Naive thymus-derived CD4-positive, alpha-beta T cell (primary cell): ENCODE measurements at regions of chrX and their contacts with region 1.

Region 1: GRCh38 chrX:9464435-9465371 is at the start of gene TBL1X:
- DNase-seq: peak; percentile 35 to 71 (median 43)
- ATAC-seq: peak; percentile 59
- H3K4me3 ChIP-seq: peak within 1 kb of the TSS; percentile 47
- H3K4me3 Mint-ChIP-seq: peak within 1 kb of the TSS; percentile 78 to 89 (median 86)
- H3K27ac ChIP-seq: peak within 1 kb of the TSS; percentile 86
- H3K27ac Mint-ChIP-seq: peak within 1 kb of the TSS; percentile 80 to 96 (median 89)
- H3K4me1 ChIP-seq: peaks cover 8 to 22% of the 10 kb centered on the region in 2 donors
- H3K4me1 Mint-ChIP-seq: peaks cover 24 to 66% (median 46%) of the 10 kb centered on the region in 7 donors
- H3K27me3 ChIP-seq: no peaks in the 10 kb centered on the region
- H3K27me3 Mint-ChIP-seq: peaks cover 0 to 3% (median 0%) of the 10 kb centered on the region in 5 donors
- total RNA-seq, gene TBL1X: 27.2 to 58.8 (median 29.4) TPM

Region 2: GRCh38 chrX:8755116-8755515 is 709.6 kb before region 1 on chrX:
- CTCF ChIA-PET with region 1: no interaction called
- POLR2A ChIA-PET with region 1: no interaction called
- intact Hi-C with region 1: no loop called
- DNase-seq: no peak
- ATAC-seq: no peak
- H3K4me3 ChIP-seq: no peak overlapping the region
- H3K4me3 Mint-ChIP-seq: no peak overlapping the region
- H3K27ac ChIP-seq: no peak overlapping the region
- H3K27ac Mint-ChIP-seq: no peak overlapping the region
- H3K4me1 ChIP-seq: no peaks in the 10 kb centered on the region
- H3K4me1 Mint-ChIP-seq: peaks cover 0 to 4% (median 0%) of the 10 kb centered on the region in 7 donors
- H3K27me3 ChIP-seq: no peaks in the 10 kb centered on the region
- H3K27me3 Mint-ChIP-seq: peaks cover 0 to 5% (median 0%) of the 10 kb centered on the region in 5 donors

Region 3: GRCh38 chrX:8820910-8821527 is 643.7 kb before region 1 on chrX:
- CTCF ChIA-PET with region 1: no interaction called
- POLR2A ChIA-PET with region 1: no interaction called
- intact Hi-C with region 1: loop called in 1 of 2 experiments (anchors 5 kb)
- DNase-seq: no peak
- ATAC-seq: no peak
- H3K4me3 ChIP-seq: no peak overlapping the region
- H3K4me3 Mint-ChIP-seq: no peak overlapping the region
- H3K27ac ChIP-seq: no peak overlapping the region
- H3K27ac Mint-ChIP-seq: peak overlapping the region in 1 of 9 donors; percentile 12
- H3K4me1 ChIP-seq: no peaks in the 10 kb centered on the region
- H3K4me1 Mint-ChIP-seq: no peaks in the 10 kb centered on the region
- H3K27me3 ChIP-seq: no peaks in the 10 kb centered on the region
- H3K27me3 Mint-ChIP-seq: peaks cover 0 to 13% (median 8%) of the 10 kb centered on the region in 5 donors

Region 4: GRCh38 chrX:9163214-9163681 is 301.5 kb before region 1 on chrX:
- CTCF ChIA-PET with region 1: no interaction called
- POLR2A ChIA-PET with region 1: no interaction called
- intact Hi-C with region 1: loop called (anchors 2 to 10 kb)
- DNase-seq: no peak
- ATAC-seq: no peak
- H3K4me3 ChIP-seq: no peak overlapping the region
- H3K4me3 Mint-ChIP-seq: no peak overlapping the region
- H3K27ac ChIP-seq: no peak overlapping the region
- H3K27ac Mint-ChIP-seq: peak overlapping the region in 1 of 9 donors; percentile 9
- H3K4me1 ChIP-seq: peaks cover 0 to 3% of the 10 kb centered on the region in 2 donors
- H3K4me1 Mint-ChIP-seq: peaks cover 0 to 39% (median 16%) of the 10 kb centered on the region in 7 donors
- H3K27me3 ChIP-seq: no peaks in the 10 kb centered on the region
- H3K27me3 Mint-ChIP-seq: peaks cover 0 to 5% (median 0%) of the 10 kb centered on the region in 5 donors

Region 5: GRCh38 chrX:9486764-9487387 is 22.2 kb after region 1 on chrX:
- CTCF ChIA-PET with region 1: no interaction called
- POLR2A ChIA-PET with region 1: no interaction called
- intact Hi-C with region 1: no loop called
- DNase-seq: no peak
- ATAC-seq: no peak
- H3K4me3 ChIP-seq: no peak overlapping the region
- H3K4me3 Mint-ChIP-seq: no peak overlapping the region
- H3K27ac ChIP-seq: no peak overlapping the region
- H3K27ac Mint-ChIP-seq: peak overlapping the region in 1 of 9 donors; percentile 1
- H3K4me1 ChIP-seq: no peaks in the 10 kb centered on the region
- H3K4me1 Mint-ChIP-seq: peaks cover 3 to 72% (median 53%) of the 10 kb centered on the region in 7 donors
- H3K27me3 ChIP-seq: no peaks in the 10 kb centered on the region
- H3K27me3 Mint-ChIP-seq: no peaks in the 10 kb centered on the region

Region 6: GRCh38 chrX:9515973-9516538 is 51.4 kb after region 1 on chrX:
- CTCF ChIA-PET with region 1: no interaction called
- POLR2A ChIA-PET with region 1: no interaction called
- intact Hi-C with region 1: loop called in 1 of 2 experiments (anchors 5 kb)
- DNase-seq: no peak
- ATAC-seq: peak; percentile 54
- H3K4me3 ChIP-seq: no peak overlapping the region
- H3K4me3 Mint-ChIP-seq: peak overlapping the region in 8 of 10 donors; percentile 41 to 73 (median 46)
- H3K27ac ChIP-seq: no peak overlapping the region
- H3K27ac Mint-ChIP-seq: peak overlapping the region in 6 of 9 donors; percentile 28 to 70 (median 51)
- H3K4me1 ChIP-seq: peaks cover 0 to 14% of the 10 kb centered on the region in 2 donors
- H3K4me1 Mint-ChIP-seq: peaks cover 18 to 60% (median 57%) of the 10 kb centered on the region in 7 donors
- H3K27me3 ChIP-seq: no peaks in the 10 kb centered on the region
- H3K27me3 Mint-ChIP-seq: no peaks in the 10 kb centered on the region

Region 7: DNA sequence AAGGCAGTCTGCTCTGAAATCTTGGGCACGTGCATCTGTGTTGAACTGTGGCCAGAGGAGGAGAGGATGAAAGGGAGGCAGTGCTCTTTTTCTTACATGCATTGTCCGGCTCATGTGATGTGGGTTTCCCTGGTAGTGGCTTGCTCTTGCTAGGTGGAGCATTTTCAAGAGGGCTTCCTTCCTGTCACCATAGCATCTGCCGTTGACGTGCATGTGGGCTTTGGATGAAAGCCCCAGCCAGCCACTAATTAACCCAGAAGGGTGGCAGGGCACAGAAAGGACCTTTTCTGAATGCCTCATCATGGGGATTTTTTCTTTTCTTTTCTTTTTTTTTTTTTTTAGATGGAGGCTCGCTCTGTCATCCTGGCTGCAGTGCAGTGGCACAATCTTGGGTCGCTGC is 179.6 kb after region 1 on chrX:
- CTCF ChIA-PET with region 1: interaction called, 3 read pairs
- POLR2A ChIA-PET with region 1: no interaction called
- intact Hi-C with region 1: loop called in 1 of 2 experiments (anchors 10 kb)
- DNase-seq: peak in 8 of 9 donors; percentile 22 to 58 (median 36)
- ATAC-seq: peak; percentile 92
- H3K4me3 ChIP-seq: no peak overlapping the region
- H3K4me3 Mint-ChIP-seq: peak overlapping the region in 8 of 10 donors; percentile 28 to 60 (median 49)
- H3K27ac ChIP-seq: no peak overlapping the region
- H3K27ac Mint-ChIP-seq: peak overlapping the region in 7 of 9 donors; percentile 9 to 78 (median 52)
- H3K4me1 ChIP-seq: peaks cover 3 to 4% of the 10 kb centered on the region in 2 donors
- H3K4me1 Mint-ChIP-seq: peaks cover 14 to 41% (median 36%) of the 10 kb centered on the region in 7 donors
- H3K27me3 ChIP-seq: no peaks in the 10 kb centered on the region
- H3K27me3 Mint-ChIP-seq: no peaks in the 10 kb centered on the region

Region 8: GRCh38 chrX:10014462-10015356 is 550.0 kb after region 1 on chrX:
- CTCF ChIA-PET with region 1: no interaction called
- POLR2A ChIA-PET with region 1: no interaction called
- intact Hi-C with region 1: loop called in 1 of 2 experiments (anchors 5 kb)
- DNase-seq: peak; percentile 62 to 84 (median 78)
- ATAC-seq: peak; percentile 97
- H3K4me3 ChIP-seq: peak overlapping the region; percentile 37
- H3K4me3 Mint-ChIP-seq: peak overlapping the region; percentile 50 to 89 (median 64)
- H3K27ac ChIP-seq: peak overlapping the region; percentile 64
- H3K27ac Mint-ChIP-seq: peak overlapping the region in 4 of 9 donors; percentile 45 to 75 (median 58)
- H3K4me1 ChIP-seq: peaks cover 7 to 13% of the 10 kb centered on the region in 2 donors
- H3K4me1 Mint-ChIP-seq: peaks cover 17 to 51% (median 43%) of the 10 kb centered on the region in 7 donors
- H3K27me3 ChIP-seq: no peaks in the 10 kb centered on the region
- H3K27me3 Mint-ChIP-seq: peaks cover 0 to 4% (median 0%) of the 10 kb centered on the region in 5 donors